ENCODE measurements at regions of chr20 and their contacts with region 1.

Region 1: DNA sequence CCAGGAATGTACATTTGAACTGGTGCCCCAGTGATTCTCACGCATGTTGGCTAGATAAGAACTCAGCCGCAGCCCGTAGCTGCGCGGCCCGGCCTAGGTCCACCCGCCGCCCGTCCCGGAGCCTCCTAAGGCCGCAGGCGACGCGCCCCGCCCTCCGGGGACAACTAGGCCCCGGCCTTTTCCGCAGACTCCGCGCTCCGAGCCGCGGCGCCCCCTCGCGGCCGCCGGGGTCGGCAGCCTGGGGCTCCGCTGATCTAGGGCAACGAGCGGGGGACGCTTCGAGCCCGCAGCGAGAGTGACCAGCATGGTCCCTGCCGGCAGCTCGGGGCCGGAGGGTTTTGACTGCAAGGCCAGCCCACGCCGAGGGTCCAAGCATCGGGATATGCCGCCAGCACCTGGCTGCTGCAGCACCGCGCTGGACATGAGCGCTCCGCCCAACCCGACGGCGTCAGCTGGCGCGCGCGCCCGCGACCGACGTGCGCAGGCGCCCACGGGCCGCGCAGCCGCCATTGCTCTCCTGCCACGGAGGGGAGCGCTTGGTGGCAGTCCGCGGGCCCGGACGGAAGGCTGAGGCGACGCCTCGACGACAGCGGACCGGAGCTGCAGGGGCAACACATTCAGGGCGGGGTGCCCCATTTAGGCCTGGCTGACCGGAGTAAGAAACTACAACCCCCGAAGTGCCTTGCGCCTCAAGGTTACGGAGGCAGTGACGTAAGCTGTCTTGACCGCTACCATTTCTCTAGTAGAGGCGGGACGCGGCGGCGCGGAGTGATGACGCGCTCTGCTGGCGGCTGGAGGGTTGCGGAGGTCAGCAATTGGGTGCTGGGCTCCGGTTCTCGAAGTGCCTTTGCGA is at the start of gene AP5S1:
- DNase-seq: peak; percentile 93
- H3K4me3 Mint-ChIP-seq: peak within 1 kb of the TSS; percentile 81
- H3K27ac Mint-ChIP-seq: peak within 1 kb of the TSS; percentile 93
- H3K4me1 Mint-ChIP-seq: peaks cover 55% of the 10 kb centered on the region
- H3K27me3 Mint-ChIP-seq: no peaks in the 10 kb centered on the region
- total RNA-seq, gene AP5S1: 16.6 to 18.2 TPM

Region 2: DNA sequence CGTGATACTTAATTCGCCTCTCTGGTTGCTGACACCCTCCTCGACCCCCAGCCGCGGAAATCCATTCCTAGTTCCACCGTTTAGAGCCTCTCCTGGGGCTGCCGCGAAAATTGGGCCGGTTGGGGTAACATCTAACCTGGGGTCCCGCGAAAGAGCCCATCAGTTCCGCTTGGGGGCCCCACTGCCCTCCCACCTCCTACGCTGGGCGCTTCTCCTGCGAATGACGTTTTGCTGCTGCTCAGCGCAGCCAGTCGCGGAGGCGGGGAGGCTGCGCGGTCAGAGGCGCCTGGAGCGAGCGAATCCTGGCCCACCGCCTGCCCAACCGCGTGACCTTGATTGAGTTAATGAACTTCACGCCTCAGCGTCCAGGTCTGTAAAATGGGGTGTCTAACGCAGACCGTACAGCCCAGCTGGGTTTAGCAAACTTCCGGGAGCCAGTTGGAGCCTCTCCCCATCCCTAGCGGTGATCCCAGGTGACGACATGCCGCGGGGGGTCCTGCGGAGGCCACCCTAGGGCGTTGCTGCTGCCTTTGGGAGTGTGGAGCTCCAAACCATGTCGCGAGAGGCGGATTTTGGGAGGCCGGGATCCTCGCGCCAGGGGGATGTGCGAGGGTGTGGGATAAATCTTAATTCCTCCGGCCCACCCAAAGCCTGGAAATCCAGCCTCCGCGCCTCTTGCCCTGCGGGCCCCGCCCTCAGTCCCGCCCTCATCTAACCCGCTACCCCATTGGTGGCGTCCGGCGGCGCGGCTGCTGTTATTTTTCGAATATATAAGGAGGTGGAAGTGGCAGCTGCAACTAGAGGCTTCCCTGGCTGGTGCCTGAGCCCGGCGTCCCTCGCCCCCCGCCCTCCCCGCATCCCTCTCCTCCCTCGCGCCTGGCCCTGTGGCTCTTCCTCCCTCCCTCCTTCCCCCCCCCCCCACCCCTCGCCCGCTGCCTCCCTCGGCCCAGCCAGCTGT is 24.5 kb before region 1 on chr20 and contains the start of gene CDC25B:
- CTCF ChIA-PET with region 1: interaction called, 94 read pairs
- POLR2A ChIA-PET with region 1: interaction called, 4 read pairs
- DNase-seq: peak; percentile 95
- H3K4me3 Mint-ChIP-seq: peak within 1 kb of the TSS; percentile 92
- H3K27ac Mint-ChIP-seq: peak within 1 kb of the TSS; percentile 98
- H3K4me1 Mint-ChIP-seq: peaks cover 40% of the 10 kb centered on the region
- H3K27me3 Mint-ChIP-seq: no peaks in the 10 kb centered on the region
- total RNA-seq, gene CDC25B: 403 to 429 TPM

Measured in activated CD4-positive, alpha-beta T cell treated with anti-CD3 and anti-CD28 coated beads, Interleukin-2, amount 10 ng/mL, durations not matched to agents 7 days and 5 days (primary cell).